Activated T-helper 2 cell treated with anti-CD3 and anti-CD28 coated beads, Interferon-gamma antibody, Interleukin-2, Interleukin-4, amounts not matched to agents 10 μg/mL and 5 μg/mL and 100 μg/mL, durations not matched to agents 14 hours and 24 hours and 36 hours (primary cell): ENCODE measurements at regions of chr12 and their contacts with region 1.

Region 1: DNA sequence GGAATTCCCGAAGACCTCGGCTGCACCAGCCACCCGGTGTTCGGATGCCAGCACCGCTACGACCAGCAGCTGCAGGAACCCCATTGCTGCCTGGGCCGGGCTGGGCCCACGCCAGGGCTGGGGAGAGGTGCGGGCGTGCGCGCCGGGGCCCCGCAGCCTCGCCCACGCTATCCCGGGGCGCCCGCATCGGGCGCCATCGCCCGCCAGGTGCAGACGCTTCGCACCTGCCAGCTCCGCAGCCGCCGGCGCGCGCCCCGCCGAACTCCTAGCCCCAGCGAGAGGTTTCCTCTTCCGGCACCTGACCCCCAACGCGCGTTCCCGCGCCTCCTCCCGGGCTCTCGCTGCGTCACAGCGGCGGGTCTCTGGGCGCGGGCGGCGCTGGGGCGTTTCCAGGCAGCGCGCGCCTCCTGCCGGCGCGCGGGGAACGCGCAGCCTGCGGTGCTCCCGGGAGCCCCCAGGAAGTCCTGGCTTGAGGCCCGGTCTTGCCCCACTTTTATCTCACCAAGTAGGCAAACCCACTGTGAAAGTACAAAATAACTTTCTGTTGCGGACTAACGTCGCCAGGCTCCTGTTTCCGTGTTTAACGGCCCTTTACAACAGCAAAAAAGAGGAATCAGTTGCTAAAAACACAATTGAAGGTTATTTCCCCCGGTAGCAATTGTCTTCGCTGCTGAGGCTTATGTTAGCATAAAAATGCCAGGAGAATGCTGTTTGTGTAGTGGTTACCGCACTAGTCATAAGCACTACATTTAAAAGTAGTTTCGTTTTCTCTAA is at the start of gene TM7SF3:
- DNase-seq: peak; percentile 94
- H3K4me3 Mint-ChIP-seq: peak within 1 kb of the TSS; percentile 93
- H3K27ac Mint-ChIP-seq: peak within 1 kb of the TSS; percentile 89
- H3K4me1 Mint-ChIP-seq: peaks cover 57% of the 10 kb centered on the region
- H3K27me3 Mint-ChIP-seq: no peaks in the 10 kb centered on the region
- total RNA-seq, gene TM7SF3: 46.7 and 51.5 TPM in 2 replicates

Region 2: DNA sequence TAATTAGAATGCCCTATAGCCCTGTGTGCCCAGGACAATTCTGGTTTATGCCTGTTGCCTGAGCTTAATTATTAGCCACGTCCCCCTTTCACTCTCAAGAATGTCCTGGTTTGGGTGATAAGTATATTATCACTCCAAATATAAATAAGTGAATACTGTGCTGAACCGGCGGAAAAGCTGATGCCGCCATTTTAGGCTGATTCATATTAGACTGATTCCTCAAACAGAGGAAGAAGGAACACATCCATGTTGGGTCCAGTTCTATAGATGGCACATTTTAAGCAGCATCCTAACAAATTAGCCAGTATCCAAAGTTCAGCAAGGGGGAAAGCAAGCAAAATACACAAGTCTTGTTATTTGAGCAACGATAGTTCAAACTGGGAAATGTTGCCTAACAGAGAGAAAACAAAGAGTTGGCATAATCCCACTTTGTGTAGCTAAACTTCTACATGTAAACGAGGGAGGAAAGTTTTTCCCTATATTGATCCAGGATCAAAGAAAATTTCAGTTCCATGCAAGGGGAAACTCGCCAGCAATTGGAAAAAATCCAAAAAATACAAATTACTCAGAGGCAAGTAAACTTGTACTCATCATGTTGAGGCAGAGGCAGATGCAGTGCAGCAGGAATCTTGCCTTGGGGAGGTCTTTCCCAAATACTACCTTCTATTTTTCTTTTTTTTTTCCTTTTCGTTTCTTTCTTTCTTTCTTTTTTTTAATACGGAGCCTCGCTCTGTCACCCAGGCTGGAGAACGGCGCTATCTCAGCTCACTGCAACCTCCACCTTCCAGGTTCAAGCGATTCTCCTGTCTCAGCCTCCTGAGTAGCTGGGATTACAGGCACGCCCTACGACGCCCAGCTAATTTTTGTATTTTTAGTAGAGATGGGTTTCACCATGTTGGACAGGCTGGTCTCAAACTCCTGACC is 277.4 kb before region 1 on chr12:
- intact Hi-C with region 1: no loop called
- DNase-seq: no peak
- H3K4me3 Mint-ChIP-seq: no peak overlapping the region
- H3K27ac Mint-ChIP-seq: no peak overlapping the region
- H3K4me1 Mint-ChIP-seq: peaks cover 25% of the 10 kb centered on the region
- H3K27me3 Mint-ChIP-seq: no peaks in the 10 kb centered on the region

Region 3: DNA sequence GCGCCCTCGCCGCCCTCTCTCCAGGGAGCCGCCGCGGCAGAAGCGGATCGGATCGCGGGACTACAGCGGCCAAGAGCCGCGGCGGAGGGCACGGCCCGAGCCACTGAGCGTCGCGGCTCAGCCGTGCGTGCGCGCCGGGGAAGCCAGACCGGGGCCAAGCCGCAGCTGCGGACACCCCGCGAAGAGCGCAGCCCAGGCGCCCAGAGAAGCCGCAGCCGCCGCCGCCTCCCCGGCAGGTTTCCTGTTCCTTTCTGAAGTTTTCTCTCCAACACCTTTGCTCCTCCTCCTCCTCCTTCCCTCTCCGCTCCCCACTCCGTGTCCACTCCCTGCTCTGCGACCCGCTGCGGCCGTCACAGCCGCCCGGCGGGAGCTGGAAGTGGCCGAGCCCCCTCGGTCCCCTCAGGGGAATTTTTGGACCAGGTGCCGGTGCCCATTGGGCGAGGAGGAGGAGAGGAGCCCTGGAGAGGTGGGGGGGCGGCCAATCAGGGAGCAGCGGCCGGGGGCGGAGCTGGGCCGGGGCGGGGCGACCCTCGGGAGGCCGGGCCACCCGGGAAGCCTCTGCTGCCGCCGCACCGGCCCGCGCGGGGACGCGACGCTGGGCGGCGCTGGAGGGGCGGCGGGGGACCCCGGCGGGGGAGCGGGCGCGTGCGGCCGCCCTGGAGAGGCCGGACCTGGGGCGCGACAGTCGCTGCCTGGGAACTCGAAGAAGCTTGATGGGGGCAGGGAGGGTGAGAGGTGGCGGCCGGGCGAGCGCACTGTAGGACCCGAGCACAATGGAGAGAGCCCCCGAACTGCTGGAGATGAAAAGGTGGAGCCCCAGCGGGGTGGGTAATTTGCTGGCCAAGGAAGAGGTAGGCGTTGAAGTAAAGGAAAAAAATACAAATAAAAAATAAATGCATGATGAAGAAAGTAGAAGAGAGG is 181.2 kb before region 1 on chr12 and contains the start of gene ITPR2:
- intact Hi-C with region 1: loop called (anchors 2 kb)
- DNase-seq: peak; percentile 88
- H3K4me3 Mint-ChIP-seq: peak within 1 kb of the TSS; percentile 95
- H3K27ac Mint-ChIP-seq: peak within 1 kb of the TSS; percentile 98
- H3K4me1 Mint-ChIP-seq: peaks cover 46% of the 10 kb centered on the region
- H3K27me3 Mint-ChIP-seq: no peaks in the 10 kb centered on the region
- total RNA-seq, gene ITPR2: 49.3 and 49.6 TPM in 2 replicates

Region 4: GRCh38 chr12:26971963-26972362 is 42.3 kb before region 1 on chr12:
- intact Hi-C with region 1: loop called (anchors 5 kb)
- DNase-seq: peak; percentile 14
- H3K4me3 Mint-ChIP-seq: no peak overlapping the region
- H3K27ac Mint-ChIP-seq: peak overlapping the region; percentile 29
- H3K4me1 Mint-ChIP-seq: peaks cover 16% of the 10 kb centered on the region
- H3K27me3 Mint-ChIP-seq: no peaks in the 10 kb centered on the region

Region 5: DNA sequence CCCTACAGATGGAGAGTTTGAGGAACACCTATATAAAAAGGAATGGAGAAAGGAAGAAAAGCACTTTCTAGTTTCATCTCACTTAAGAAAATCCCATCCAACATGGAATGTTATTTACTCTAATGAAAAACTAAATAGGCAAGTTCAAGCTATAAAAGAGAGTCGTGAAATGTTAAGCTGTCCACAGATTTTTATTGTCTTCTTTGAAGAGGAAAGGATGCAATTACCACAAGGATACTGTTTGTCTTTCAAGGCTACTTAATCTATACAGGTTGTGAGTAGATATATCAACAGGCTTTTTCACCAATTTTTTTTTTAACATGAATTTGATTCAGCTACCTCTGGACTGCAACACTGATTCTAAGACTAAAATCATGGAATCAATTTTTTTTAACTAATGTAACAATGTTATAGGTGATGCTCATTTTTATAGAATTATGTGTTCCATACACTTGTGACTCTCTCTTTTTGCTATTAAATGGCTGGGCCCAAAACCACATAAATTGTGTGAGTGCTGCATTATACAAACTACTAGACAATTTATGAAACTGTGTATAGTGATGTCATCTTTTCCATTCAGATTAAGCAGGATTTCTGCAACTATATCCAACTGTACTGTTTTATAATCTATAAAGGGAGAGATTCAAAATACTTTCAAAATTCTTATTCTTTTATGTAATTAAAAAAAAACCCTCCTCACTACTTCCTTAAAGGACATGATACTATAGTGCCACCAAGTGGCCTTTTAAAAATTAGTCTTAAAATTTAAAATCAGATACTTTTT is 291.6 kb after region 1 on chr12:
- intact Hi-C with region 1: loop called (anchors 1 kb)
- DNase-seq: no peak
- H3K4me3 Mint-ChIP-seq: no peak overlapping the region
- H3K27ac Mint-ChIP-seq: peak overlapping the region; percentile 28
- H3K4me1 Mint-ChIP-seq: peaks cover 17% of the 10 kb centered on the region
- H3K27me3 Mint-ChIP-seq: no peaks in the 10 kb centered on the region